ENCODE measurements at regions of chr20 and their contacts with region 1.

Region 1: DNA sequence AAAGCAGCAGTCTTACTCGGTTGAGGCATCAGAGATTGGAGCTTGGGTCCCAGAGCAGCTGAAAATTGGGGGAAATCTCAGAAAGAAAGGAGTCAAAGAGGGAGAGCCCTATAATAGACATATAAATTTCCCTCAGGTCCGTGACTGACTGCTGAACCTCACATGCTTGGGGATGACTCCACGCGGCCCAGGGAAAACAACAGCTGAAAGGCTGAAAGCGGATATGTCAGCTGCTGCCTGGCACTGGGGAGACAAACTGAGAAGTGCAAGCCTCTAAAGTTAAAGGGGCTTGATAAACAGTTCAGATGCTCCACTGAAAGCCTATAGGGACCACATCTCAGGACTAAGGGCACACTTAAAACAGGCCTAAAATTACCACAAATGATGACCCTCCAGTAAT is 255.9 kb upstream of the RIN2 start:
- DNase-seq: peak; percentile 29 to 79
- ATAC-seq: peak; percentile 94 to 99 (median 98)
- H3K4me3 ChIP-seq: peak overlapping the region; percentile 16
- H3K27ac ChIP-seq: peak overlapping the region; percentile 93
- H3K4me1 ChIP-seq: peaks cover 30% of the 10 kb centered on the region
- H3K27me3 ChIP-seq: no peaks in the 10 kb centered on the region
- CTCF ChIP-seq: no peak

Region 2: DNA sequence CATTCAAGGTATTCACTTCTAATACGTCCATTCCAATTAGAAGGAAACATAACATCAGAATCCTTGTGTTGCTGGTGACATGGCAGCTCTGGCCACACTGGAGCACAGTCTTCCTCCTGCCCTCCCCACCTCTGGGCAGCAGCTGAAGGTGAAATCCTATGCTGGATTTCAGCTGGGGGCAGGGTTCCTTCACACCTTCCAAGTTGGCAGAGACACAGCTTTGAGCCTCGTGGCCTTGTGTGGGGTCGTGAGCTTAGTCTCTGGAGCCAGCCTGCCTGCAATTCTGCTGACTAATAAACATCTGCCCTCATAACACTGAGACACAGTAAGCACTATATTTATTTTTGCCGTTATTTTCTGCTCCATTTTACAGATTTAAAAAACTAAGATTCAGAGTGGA is 37.0 kb after region 1 on chr20:
- intact Hi-C with region 1: loop called in 1 of 2 experiments (anchors 5 kb)
- DNase-seq: peak in 1 of 2 donors; percentile 56
- ATAC-seq: peak; percentile 58 to 97 (median 94)
- H3K4me3 ChIP-seq: no peak overlapping the region
- H3K27ac ChIP-seq: peak overlapping the region; percentile 30
- H3K4me1 ChIP-seq: peaks cover 18% of the 10 kb centered on the region
- H3K27me3 ChIP-seq: no peaks in the 10 kb centered on the region
- CTCF ChIP-seq: no peak